OCI-LY7 (cell line): ENCODE measurements at regions of chr17 and their contacts with region 1.

Region 1: GRCh38 chr17:76264755-76265596 is at the start of gene UBALD2:
- DNase-seq: peak; percentile 100
- H3K4me3 ChIP-seq: peak within 1 kb of the TSS; percentile 89
- H3K27ac ChIP-seq: peak within 1 kb of the TSS; percentile 90
- H3K4me1 ChIP-seq: peaks cover 83% of the 10 kb centered on the region
- CTCF ChIP-seq: no peak
- total RNA-seq, gene UBALD2: 70.9 and 86.4 TPM in 2 replicates

Region 2: DNA sequence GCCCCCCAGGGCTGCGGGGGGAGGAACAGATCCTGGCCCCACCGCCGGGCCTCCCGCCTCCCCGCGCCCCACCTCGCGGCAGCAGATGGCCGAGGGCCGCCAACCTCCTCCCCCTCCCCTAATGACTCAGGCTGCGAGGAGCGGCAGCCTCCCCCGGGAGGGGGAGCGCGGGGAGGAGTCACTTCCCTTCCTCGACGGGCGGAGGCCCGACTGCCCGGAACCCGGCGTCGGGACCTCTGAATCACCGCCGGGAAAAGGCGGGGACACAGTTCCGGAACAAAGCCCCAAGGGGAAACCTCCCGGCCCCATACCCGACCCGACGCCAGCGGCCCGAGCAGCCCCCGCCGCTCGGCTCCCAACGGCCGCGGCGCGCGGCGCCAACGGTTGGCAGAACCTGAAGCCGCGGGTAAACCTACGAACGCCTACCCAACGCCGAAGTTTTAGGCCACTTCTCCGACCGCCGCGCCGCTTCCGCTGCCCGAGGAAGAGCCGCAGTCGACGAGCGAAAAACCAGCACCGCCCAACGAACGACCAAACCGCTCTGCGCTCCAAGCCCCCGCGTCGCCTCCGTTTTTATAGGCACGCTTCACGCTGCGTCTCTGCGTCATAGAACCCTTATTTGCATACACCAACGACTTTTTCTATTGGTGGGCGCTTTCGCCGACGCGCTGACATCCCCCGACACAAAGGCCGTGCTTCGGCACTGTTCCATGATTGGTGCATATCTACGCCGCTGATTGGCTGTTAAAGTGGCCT is 485.6 kb before region 1 on chr17:
- CTCF ChIA-PET with region 1: no interaction called
- POLR2A ChIA-PET with region 1: no interaction called
- intact Hi-C with region 1: loop called (anchors 5 kb)
- DNase-seq: peak; percentile 100
- H3K4me3 ChIP-seq: peak overlapping the region; percentile 83
- H3K27ac ChIP-seq: peak overlapping the region; percentile 84
- H3K4me1 ChIP-seq: peaks cover 45% of the 10 kb centered on the region
- CTCF ChIP-seq: peak; percentile 71

Region 3: DNA sequence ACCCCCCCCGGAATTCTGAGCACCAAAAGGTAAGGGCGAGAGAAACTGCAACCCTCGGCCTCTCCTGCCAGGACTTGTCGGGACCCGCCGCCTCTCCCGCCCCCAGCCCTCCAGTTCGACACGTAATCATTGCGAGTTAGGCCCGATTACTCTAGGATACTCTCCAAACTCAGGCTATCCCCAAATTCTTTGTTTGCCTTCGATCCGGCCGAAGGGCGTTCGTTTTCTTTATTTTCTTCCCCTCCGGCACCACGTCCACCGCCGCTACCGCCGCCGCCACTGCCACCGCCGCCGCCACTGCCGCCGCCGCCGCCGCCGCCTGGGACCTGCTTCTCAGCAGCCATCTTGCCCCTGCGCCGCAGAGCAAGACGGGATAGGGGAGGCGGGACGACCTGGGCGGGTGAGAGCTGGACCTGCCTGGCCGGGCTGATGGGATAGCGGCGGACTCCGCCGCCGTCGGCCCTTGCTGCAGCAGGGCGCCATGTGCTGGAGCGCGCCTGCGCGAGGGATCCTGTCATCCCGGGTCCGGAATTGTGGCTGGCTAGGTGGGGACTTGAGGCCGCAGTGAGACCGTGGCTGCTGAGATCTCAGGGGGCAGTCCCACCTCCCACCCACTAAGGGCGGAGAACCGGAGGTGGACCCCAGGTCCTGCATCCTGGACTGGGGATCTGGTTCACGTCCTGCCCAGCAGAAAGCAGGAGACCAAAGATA is 192.7 kb before region 1 on chr17 and contains the start of gene SRP68:
- CTCF ChIA-PET with region 1: no interaction called
- POLR2A ChIA-PET with region 1: interaction called, 5 read pairs
- intact Hi-C with region 1: loop called (anchors 2 kb)
- DNase-seq: peak; percentile 90
- H3K4me3 ChIP-seq: peak within 1 kb of the TSS; percentile 78
- H3K27ac ChIP-seq: peak within 1 kb of the TSS; percentile 72
- H3K4me1 ChIP-seq: peaks cover 20% of the 10 kb centered on the region
- CTCF ChIP-seq: no peak
- total RNA-seq, gene SRP68: 53.5 and 54.0 TPM in 2 replicates

Region 4: GRCh38 chr17:76136276-76137000 is 128.5 kb before region 1 on chr17:
- CTCF ChIA-PET with region 1: no interaction called
- POLR2A ChIA-PET with region 1: no interaction called
- intact Hi-C with region 1: no loop called
- DNase-seq: no peak
- H3K4me3 ChIP-seq: no peak overlapping the region
- H3K27ac ChIP-seq: no peak overlapping the region
- H3K4me1 ChIP-seq: peaks cover 31% of the 10 kb centered on the region
- CTCF ChIP-seq: no peak

Region 5: DNA sequence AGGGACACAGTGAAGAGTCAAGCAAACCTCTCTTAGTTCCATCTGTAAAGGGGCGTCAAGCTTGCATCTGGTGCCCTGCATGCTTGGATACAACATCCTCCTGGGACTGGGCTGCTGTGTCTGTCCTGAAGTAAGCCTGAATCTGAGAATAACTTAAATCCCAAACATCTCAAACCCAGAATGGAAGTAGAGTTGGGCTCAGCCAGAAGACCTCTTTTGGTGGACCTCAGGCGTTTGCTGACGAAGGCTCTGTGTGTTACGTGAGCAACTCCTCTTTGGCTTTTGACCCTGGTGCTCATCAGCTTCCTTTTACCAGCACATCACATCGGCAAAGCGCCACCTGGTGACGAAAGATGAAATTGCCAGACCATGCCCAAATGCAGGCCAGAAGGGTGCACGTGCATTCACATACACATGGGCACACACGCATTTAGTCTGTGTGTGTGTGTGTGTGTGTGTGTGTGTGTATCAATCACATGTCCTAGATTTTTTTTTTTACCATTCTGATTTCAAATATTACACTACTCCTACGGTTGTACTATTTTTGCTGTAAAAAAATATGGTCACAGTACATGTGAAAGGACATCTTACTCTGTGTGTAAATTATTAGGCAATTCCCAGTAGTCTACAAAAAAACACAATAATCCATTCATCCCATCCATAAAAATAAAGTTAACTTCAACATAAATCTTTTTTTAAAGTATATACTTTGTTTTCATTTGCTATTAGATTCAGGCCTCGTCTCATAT is 82.8 kb before region 1 on chr17:
- CTCF ChIA-PET with region 1: interaction called, 7 read pairs
- POLR2A ChIA-PET with region 1: interaction called, 11 read pairs
- intact Hi-C with region 1: no loop called
- DNase-seq: peak; percentile 95
- H3K4me3 ChIP-seq: no peak overlapping the region
- H3K27ac ChIP-seq: no peak overlapping the region
- H3K4me1 ChIP-seq: peaks cover 28% of the 10 kb centered on the region
- CTCF ChIP-seq: peak; percentile 99

Region 6: DNA sequence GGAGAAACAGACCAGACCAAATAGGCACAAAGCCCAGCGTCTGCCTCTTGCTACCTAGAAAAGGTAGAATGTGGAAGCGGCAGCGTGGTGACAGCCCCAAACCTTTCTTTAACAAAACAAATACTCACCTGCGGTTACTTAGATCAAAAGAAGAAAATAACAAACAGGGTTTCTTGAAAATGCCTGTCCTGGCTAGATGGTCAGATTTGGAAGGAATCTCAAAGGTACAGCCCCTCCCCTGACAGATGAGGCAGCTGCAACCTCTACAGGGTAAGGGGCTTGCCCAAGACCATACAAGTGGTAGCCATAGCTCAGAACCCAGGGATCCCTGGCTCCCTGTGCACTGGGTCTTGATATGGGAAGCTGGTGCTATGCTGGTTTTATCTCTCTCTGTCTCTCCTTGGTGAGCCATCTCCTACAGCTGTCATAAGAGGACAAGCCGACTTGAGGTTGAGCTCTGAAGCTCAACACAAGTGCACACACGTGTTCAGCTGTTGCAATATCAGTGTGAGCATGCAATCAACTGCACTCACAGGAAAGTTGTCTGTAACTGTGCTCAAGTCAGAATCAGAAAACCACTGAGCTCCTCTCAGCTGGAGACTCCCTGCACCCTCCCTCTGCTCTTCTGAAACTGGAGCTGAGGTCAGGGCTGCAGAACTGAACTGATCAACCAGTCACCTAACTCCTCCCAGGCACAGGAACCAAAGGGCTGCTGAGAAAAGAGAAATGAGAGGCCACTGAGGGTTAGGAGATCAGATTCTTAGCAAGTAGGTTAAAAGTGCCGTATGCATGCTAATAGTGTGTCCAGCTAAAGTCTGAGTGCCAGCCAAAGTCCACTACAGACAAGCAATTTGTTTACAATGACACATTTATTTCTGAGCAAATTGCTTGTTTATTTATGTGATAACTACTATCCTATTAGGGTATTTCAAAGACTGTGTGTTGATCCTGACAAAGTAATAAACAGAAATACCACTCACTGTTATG is 18.6 kb before region 1 on chr17:
- CTCF ChIA-PET with region 1: interaction called, 4 read pairs
- POLR2A ChIA-PET with region 1: interaction called, 71 read pairs
- intact Hi-C with region 1: no loop called
- DNase-seq: peak; percentile 51
- H3K4me3 ChIP-seq: no peak overlapping the region
- H3K27ac ChIP-seq: no peak overlapping the region
- H3K4me1 ChIP-seq: peaks cover 9% of the 10 kb centered on the region
- CTCF ChIP-seq: no peak

Region 7: GRCh38 chr17:76726231-76726775 is 461.3 kb after region 1 on chr17 and contains the start of gene JMJD6:
- CTCF ChIA-PET with region 1: no interaction called
- POLR2A ChIA-PET with region 1: interaction called, 4 read pairs
- intact Hi-C with region 1: loop called (anchors 5 kb)
- DNase-seq: peak; percentile 100
- H3K4me3 ChIP-seq: peak within 1 kb of the TSS; percentile 78
- H3K27ac ChIP-seq: peak within 1 kb of the TSS; percentile 91
- H3K4me1 ChIP-seq: peaks cover 38% of the 10 kb centered on the region
- CTCF ChIP-seq: no peak
- total RNA-seq, gene JMJD6: 39.9 and 41.2 TPM in 2 replicates

Region 8: GRCh38 chr17:77465358-77466041 is 1200.5 kb after region 1 on chr17:
- CTCF ChIA-PET with region 1: no interaction called
- POLR2A ChIA-PET with region 1: no interaction called
- intact Hi-C with region 1: loop called (anchors 10 kb)
- DNase-seq: peak; percentile 96
- H3K4me3 ChIP-seq: peak overlapping the region; percentile 52
- H3K27ac ChIP-seq: peak overlapping the region; percentile 95
- H3K4me1 ChIP-seq: peaks cover 97% of the 10 kb centered on the region
- CTCF ChIP-seq: no peak